CD8-positive, alpha-beta memory T cell (primary cell): ENCODE measurements at regions of chr14 and their contacts with region 1.

Region 1: GRCh38 chr14:91373591-91374254 is 43.9 kb downstream of the CCDC88C start:
- DNase-seq: peak in 4 of 5 donors; percentile 37 to 68 (median 51)
- H3K4me3 ChIP-seq: peak overlapping the region; percentile 68
- H3K4me3 Mint-ChIP-seq: peak overlapping the region; percentile 71 to 90 (median 85)
- H3K27ac ChIP-seq: peak overlapping the region; percentile 63
- H3K27ac Mint-ChIP-seq: peak overlapping the region; percentile 84 to 99 (median 95)
- H3K4me1 ChIP-seq: peaks cover 99% of the 10 kb centered on the region
- H3K4me1 Mint-ChIP-seq: peaks cover 94 to 100% (median 100%) of the 10 kb centered on the region in 3 donors
- H3K27me3 ChIP-seq: no peaks in the 10 kb centered on the region
- H3K27me3 Mint-ChIP-seq: no peaks in the 10 kb centered on the region

Region 2: DNA sequence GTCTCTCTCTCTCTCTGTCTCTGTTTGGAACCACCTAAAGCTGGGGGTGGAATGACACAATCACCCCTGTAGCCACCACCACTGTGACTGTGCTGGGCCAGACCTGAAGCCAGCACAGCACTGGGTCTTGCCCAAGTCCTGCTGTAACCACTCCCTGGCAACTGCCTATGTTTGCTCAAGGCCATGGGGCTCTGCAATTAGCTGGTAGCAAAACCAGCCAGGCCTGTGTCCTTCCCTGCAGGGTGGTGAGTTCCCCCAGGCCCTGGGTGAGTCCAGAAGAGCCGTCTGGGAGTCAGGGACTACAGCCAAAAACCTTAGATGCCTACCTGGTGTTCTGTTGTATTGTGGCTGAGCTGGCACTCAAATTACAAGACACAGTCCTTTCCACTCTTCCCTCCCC is 209.0 kb before region 1 on chr14:
- CTCF ChIA-PET with region 1: no interaction called
- POLR2A ChIA-PET with region 1: no interaction called
- DNase-seq: no peak
- H3K4me3 ChIP-seq: no peak overlapping the region
- H3K4me3 Mint-ChIP-seq: no peak overlapping the region
- H3K27ac ChIP-seq: no peak overlapping the region
- H3K27ac Mint-ChIP-seq: peak overlapping the region in 5 of 8 donors; percentile 12 to 79 (median 39)
- H3K4me1 ChIP-seq: no peaks in the 10 kb centered on the region
- H3K4me1 Mint-ChIP-seq: peaks cover 0 to 2% (median 0%) of the 10 kb centered on the region in 3 donors
- H3K27me3 ChIP-seq: no peaks in the 10 kb centered on the region
- H3K27me3 Mint-ChIP-seq: no peaks in the 10 kb centered on the region

Region 3: DNA sequence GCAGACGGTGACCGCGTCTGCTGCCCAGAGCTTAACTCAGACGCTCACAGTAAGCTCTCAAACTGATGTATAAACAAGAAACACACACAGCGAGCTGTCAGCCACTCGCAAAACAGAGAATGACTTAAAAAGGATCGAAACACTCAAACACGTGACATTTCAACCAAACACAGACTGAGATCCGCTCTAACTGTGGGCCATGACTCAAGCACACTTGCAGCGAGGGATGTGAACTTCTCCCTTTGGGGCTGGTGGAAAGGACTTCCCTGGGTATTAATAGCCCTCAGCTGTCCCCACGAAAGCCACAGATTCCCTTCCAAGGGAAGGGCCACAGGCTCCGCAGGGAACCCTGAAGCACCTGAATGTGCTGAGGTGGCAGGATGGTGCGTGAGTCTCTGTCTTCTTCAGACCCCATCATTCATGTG is 14.8 kb after region 1 on chr14:
- CTCF ChIA-PET with region 1: interaction called, 7 read pairs
- POLR2A ChIA-PET with region 1: interaction called, 15 read pairs
- DNase-seq: peak in 2 of 5 donors; percentile 63 to 67
- H3K4me3 ChIP-seq: peak overlapping the region; percentile 33
- H3K4me3 Mint-ChIP-seq: peak overlapping the region; percentile 63 to 84 (median 73)
- H3K27ac ChIP-seq: no peak overlapping the region
- H3K27ac Mint-ChIP-seq: peak overlapping the region; percentile 84 to 93 (median 88)
- H3K4me1 ChIP-seq: peaks cover 99% of the 10 kb centered on the region
- H3K4me1 Mint-ChIP-seq: peaks cover 86 to 97% (median 93%) of the 10 kb centered on the region in 3 donors
- H3K27me3 ChIP-seq: no peaks in the 10 kb centered on the region
- H3K27me3 Mint-ChIP-seq: no peaks in the 10 kb centered on the region